Activated CD4-positive, alpha-beta memory T cell treated with anti-CD3 and anti-CD28 coated beads, Interleukin-2, amount 10 ng/mL, durations not matched to agents 7 days and 5 days (primary cell): ENCODE measurements at regions of chr18 and their contacts with region 1.

Region 1: GRCh38 chr18:79393635-79394533 is 1.8 kb upstream of the NFATC1 start:
- DNase-seq: peak; percentile 42
- H3K4me3 Mint-ChIP-seq: peak overlapping the region; percentile 75
- H3K27ac Mint-ChIP-seq: no peak overlapping the region
- H3K4me1 Mint-ChIP-seq: peaks cover 22% of the 10 kb centered on the region
- H3K27me3 Mint-ChIP-seq: peaks cover 40% of the 10 kb centered on the region

Region 2: DNA sequence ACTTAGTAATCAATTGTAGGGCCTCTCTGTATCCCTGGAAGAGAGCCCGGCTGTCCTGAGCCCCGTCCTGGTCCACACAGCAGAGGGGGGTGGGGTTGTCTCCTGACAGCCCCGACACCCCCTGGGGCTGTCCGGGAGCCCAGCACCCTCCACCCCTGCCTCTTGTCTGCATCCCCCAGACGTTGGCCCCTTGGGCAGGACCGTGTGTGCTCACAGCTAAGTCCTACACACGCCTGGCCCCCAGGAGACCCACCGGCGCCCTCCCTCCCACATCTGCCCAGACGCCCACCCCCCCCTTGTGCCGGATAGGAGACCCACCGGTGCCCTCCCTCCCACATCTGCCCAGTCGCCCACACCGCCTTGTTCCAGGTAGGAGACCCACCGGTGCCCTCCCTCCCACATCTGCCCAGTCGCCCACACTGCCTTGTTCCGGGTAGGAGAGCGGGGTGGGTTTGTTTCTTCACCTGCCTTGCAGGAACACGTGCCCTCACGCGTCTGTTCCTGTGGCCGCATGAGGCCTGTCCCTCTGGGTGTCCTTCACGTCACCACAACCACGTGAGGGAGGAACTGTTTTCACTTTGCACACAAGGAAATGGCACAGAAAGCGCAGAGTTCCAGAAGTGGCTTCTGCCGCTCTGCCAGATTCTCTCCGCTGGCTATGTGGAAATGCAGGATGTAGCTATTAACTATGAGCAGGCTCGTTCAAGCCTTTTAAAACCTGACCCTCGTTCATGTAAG is 59.2 kb before region 1 on chr18:
- CTCF ChIA-PET with region 1: no interaction called
- POLR2A ChIA-PET with region 1: no interaction called
- DNase-seq: no peak
- H3K4me3 Mint-ChIP-seq: no peak overlapping the region
- H3K27ac Mint-ChIP-seq: no peak overlapping the region
- H3K4me1 Mint-ChIP-seq: no peaks in the 10 kb centered on the region
- H3K27me3 Mint-ChIP-seq: no peaks in the 10 kb centered on the region

Region 3: GRCh38 chr18:79378542-79379250 is 15.2 kb before region 1 on chr18:
- CTCF ChIA-PET with region 1: interaction called, 12 read pairs
- POLR2A ChIA-PET with region 1: interaction called, 3 read pairs
- DNase-seq: peak; percentile 83
- H3K4me3 Mint-ChIP-seq: no peak overlapping the region
- H3K27ac Mint-ChIP-seq: no peak overlapping the region
- H3K4me1 Mint-ChIP-seq: peaks cover 14% of the 10 kb centered on the region
- H3K27me3 Mint-ChIP-seq: no peaks in the 10 kb centered on the region

Region 4: GRCh38 chr18:79405781-79406575 is 12.1 kb after region 1 on chr18:
- CTCF ChIA-PET with region 1: interaction called, 5 read pairs
- POLR2A ChIA-PET with region 1: interaction called, 28 read pairs
- DNase-seq: peak; percentile 91
- H3K4me3 Mint-ChIP-seq: peak overlapping the region; percentile 80
- H3K27ac Mint-ChIP-seq: peak overlapping the region; percentile 93
- H3K4me1 Mint-ChIP-seq: peaks cover 57% of the 10 kb centered on the region
- H3K27me3 Mint-ChIP-seq: no peaks in the 10 kb centered on the region

Region 5: GRCh38 chr18:79523736-79524180 is 129.9 kb after region 1 on chr18:
- CTCF ChIA-PET with region 1: interaction called, 15 read pairs
- POLR2A ChIA-PET with region 1: interaction called, 39 read pairs
- DNase-seq: peak; percentile 80
- H3K4me3 Mint-ChIP-seq: peak overlapping the region; percentile 65
- H3K27ac Mint-ChIP-seq: peak overlapping the region; percentile 88
- H3K4me1 Mint-ChIP-seq: peaks cover 60% of the 10 kb centered on the region
- H3K27me3 Mint-ChIP-seq: no peaks in the 10 kb centered on the region